ENCODE measurements at regions of chr3 and their contacts with region 1.

Region 1: GRCh38 chr3:51371943-51372557 is 13.0 kb upstream of the MANF start:
- DNase-seq: peak; percentile 65
- CTCF ChIP-seq: peak; percentile 72

Region 2: GRCh38 chr3:50390508-50391224 is 981.4 kb before region 1 on chr3:
- in situ Hi-C with region 1: no loop called
- DNase-seq: no peak
- CTCF ChIP-seq: no peak

Region 3: GRCh38 chr3:50961386-50961785 is 410.7 kb before region 1 on chr3:
- in situ Hi-C with region 1: loop called (anchors 10 kb)
- DNase-seq: no peak
- CTCF ChIP-seq: no peak

Region 4: GRCh38 chr3:51141573-51141972 is 230.5 kb before region 1 on chr3:
- in situ Hi-C with region 1: no loop called
- DNase-seq: no peak
- CTCF ChIP-seq: no peak